ENCODE measurements at regions of chr17 and their contacts with region 1.

Region 1: DNA sequence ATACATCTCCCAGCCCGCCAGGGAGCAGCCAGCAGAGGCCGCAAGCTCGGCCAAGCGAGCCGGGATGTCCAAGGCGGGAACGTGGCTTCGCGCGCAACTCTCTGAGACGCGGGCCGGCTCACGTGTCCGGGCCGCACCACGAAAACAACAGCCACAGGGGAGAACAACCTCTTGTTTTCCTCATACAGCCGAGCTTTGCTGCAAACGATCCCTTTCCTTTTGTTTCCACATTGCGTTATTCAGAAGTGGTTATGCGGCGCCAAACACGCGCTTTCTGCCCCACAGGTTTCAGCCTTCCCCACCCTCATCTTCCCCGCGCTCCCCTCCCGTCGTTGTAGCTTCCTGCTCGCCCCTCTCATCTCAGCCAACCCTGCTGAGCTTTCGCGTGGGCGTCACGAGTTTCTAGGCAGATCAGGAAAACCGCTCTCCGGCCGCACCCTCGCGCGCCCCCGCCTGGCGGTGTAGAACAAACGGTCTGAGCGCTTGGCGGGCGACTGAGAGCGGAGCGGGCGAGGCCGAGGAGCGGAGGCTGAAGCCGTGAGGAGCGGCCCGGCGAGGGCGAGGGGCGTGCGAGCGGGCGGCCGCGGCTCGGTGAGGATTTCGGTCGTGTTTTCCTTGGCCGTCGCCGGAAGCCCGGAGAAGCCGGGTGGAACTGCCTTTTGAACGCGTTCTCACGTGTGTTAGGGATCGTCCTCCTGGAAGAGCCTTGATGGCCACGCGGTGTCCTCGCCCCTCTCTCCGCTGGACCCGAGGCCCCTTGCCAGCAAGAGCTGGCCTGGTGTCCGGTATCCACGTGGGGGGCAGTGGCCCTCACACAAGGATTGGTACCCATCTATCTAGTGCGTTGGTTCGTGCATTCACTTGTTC is 6.6 kb upstream of the SMARCD2 start:
- DNase-seq: peak; percentile 92 to 93 (median 93)
- H3K4me3 ChIP-seq: peak overlapping the region; percentile 42
- H3K4me3 Mint-ChIP-seq: peak overlapping the region; percentile 58 to 87 (median 83)
- H3K27ac ChIP-seq: peak overlapping the region; percentile 55
- H3K27ac Mint-ChIP-seq: peak overlapping the region; percentile 67 to 98 (median 96)
- H3K4me1 ChIP-seq: peaks cover 10% of the 10 kb centered on the region
- H3K4me1 Mint-ChIP-seq: peaks cover 13 to 19% (median 15%) of the 10 kb centered on the region in 3 donors
- H3K27me3 ChIP-seq: no peaks in the 10 kb centered on the region
- H3K27me3 Mint-ChIP-seq: peaks cover 0 to 2% of the 10 kb centered on the region in 2 donors

Region 2: GRCh38 chr17:63549946-63550807 is 298.9 kb before region 1 on chr17 and contains the start of gene DCAF7:
- CTCF ChIA-PET with region 1: no interaction called
- POLR2A ChIA-PET with region 1: no interaction called
- DNase-seq: peak; percentile 99
- H3K4me3 ChIP-seq: peak within 1 kb of the TSS; percentile 77
- H3K4me3 Mint-ChIP-seq: peak within 1 kb of the TSS; percentile 82 to 99 (median 98)
- H3K27ac ChIP-seq: peak within 1 kb of the TSS; percentile 96
- H3K27ac Mint-ChIP-seq: peak within 1 kb of the TSS; percentile 91 to 99 (median 96)
- H3K4me1 ChIP-seq: peaks cover 40% of the 10 kb centered on the region
- H3K4me1 Mint-ChIP-seq: peaks cover 41 to 48% (median 42%) of the 10 kb centered on the region in 3 donors
- H3K27me3 ChIP-seq: no peaks in the 10 kb centered on the region
- H3K27me3 Mint-ChIP-seq: no peaks in the 10 kb centered on the region
- total RNA-seq, gene DCAF7: 99.1 to 102 TPM

Region 3: GRCh38 chr17:63827002-63827771 is 21.9 kb before region 1 on chr17 and contains the starts of genes FTSJ3 and PSMC5:
- CTCF ChIA-PET with region 1: interaction called, 37 read pairs
- POLR2A ChIA-PET with region 1: interaction called, 73 read pairs
- DNase-seq: peak; percentile 92 to 98 (median 95)
- H3K4me3 ChIP-seq: peak within 1 kb of the TSS; percentile 94
- H3K4me3 Mint-ChIP-seq: peak within 1 kb of the TSS; percentile 95 to 100 (median 97)
- H3K27ac ChIP-seq: peak within 1 kb of the TSS; percentile 78
- H3K27ac Mint-ChIP-seq: peak within 1 kb of the TSS; percentile 97 to 100 (median 99)
- H3K4me1 ChIP-seq: peaks cover 55% of the 10 kb centered on the region
- H3K4me1 Mint-ChIP-seq: peaks cover 68 to 89% (median 72%) of the 10 kb centered on the region in 3 donors
- H3K27me3 ChIP-seq: no peaks in the 10 kb centered on the region
- H3K27me3 Mint-ChIP-seq: peaks cover 0 to 2% of the 10 kb centered on the region in 2 donors
- total RNA-seq, gene FTSJ3: 98.1 to 102 TPM
- total RNA-seq, gene PSMC5: 208 to 212 TPM

Region 4: DNA sequence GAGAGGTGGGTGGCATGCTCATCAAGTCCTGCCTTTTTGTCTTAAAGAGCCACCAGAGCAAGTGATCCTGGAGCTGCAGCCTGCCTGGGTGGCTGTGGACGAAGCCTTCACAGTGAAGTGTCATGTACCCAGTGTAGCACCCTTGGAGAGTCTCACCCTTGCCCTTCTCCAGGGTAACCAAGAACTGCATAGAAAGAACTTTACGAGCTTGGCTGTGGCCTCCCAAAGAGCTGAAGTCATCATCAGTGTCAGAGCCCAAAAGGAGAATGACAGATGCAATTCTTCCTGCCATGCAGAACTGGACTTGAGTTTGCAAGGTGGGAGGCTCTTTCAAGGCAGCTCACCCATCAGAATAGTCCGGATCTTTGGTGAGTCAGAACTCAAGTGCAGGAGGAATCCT is 10.2 kb after region 1 on chr17:
- CTCF ChIA-PET with region 1: interaction called, 31 read pairs
- POLR2A ChIA-PET with region 1: no interaction called
- DNase-seq: no peak
- H3K4me3 ChIP-seq: no peak overlapping the region
- H3K4me3 Mint-ChIP-seq: no peak overlapping the region
- H3K27ac ChIP-seq: no peak overlapping the region
- H3K27ac Mint-ChIP-seq: peak overlapping the region in 1 of 8 donors; percentile 24
- H3K4me1 ChIP-seq: no peaks in the 10 kb centered on the region
- H3K4me1 Mint-ChIP-seq: no peaks in the 10 kb centered on the region
- H3K27me3 ChIP-seq: no peaks in the 10 kb centered on the region
- H3K27me3 Mint-ChIP-seq: peaks cover 3 to 5% of the 10 kb centered on the region in 2 donors